ENCODE measurements at regions of chr9 and their contacts with region 1.

Region 1: GRCh38 chr9:13279284-13280141 is at the start of gene MPDZ:
- DNase-seq: peak; percentile 36 to 84 (median 62)
- H3K4me3 ChIP-seq: peak within 1 kb of the TSS; percentile 66 to 90 (median 81)
- H3K27ac ChIP-seq: peak within 1 kb of the TSS; percentile 93 to 100 (median 98)
- H3K27me3 ChIP-seq: no peaks in the 10 kb centered on the region
- CTCF ChIP-seq: peak in 10 of 56 donors; percentile 7 to 23 (median 14)
- total RNA-seq, gene MPDZ: 73.3 to 137 (median 97.1) TPM

Region 2: GRCh38 chr9:13033959-13034693 is 245.4 kb before region 1 on chr9:
- intact Hi-C with region 1: loop called in 1 of 2 experiments (anchors 5 kb)
- DNase-seq: peak; percentile 61 to 80 (median 68)
- H3K4me3 ChIP-seq: peak overlapping the region in 53 of 59 donors; percentile 5 to 54 (median 36)
- H3K27ac ChIP-seq: peak overlapping the region in 3 of 59 donors; percentile 7 to 36 (median 30)
- H3K27me3 ChIP-seq: no peaks in the 10 kb centered on the region
- CTCF ChIP-seq: peak; percentile 45 to 89 (median 79)

Region 3: DNA sequence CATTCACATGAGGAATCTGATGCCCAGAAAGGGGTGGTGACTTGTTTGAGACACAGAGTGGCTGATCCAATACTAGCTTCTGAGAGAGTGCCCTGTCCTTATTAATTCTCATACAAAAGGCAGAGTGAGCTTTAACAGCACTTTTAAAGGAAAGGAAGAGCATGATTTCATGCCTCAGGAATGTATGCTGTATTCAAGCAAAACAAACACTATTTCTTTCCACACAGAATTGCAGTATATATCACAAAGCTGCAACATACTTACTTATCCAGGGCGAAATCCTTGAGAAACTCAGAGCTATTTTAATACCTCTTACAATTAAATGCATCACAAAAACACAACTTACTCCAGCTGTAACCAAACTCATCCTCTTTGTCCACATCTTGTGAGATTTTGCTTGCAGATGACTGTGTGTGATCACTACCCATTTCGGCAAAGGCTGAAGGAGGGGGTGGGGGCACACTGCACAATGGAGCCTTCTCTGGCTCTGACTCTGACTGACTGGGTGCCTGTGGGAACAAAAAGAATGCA is 139.8 kb before region 1 on chr9:
- intact Hi-C with region 1: loop called (anchors 10 kb)
- DNase-seq: peak in 9 of 10 donors; percentile 38 to 73 (median 53)
- H3K4me3 ChIP-seq: peak overlapping the region in 36 of 59 donors; percentile 1 to 58 (median 30)
- H3K27ac ChIP-seq: peak overlapping the region in 55 of 59 donors; percentile 2 to 98 (median 68)
- H3K27me3 ChIP-seq: no peaks in the 10 kb centered on the region
- CTCF ChIP-seq: no peak

Region 4: GRCh38 chr9:13234932-13235331 is 44.6 kb before region 1 on chr9:
- intact Hi-C with region 1: no loop called
- DNase-seq: no peak
- H3K4me3 ChIP-seq: no peak overlapping the region
- H3K27ac ChIP-seq: no peak overlapping the region
- H3K27me3 ChIP-seq: no peaks in the 10 kb centered on the region
- CTCF ChIP-seq: no peak

Region 5: GRCh38 chr9:13330396-13331004 is 51.0 kb after region 1 on chr9:
- intact Hi-C with region 1: loop called in 1 of 2 experiments (anchors 10 kb)
- DNase-seq: peak in 1 of 10 donors; percentile 37
- H3K4me3 ChIP-seq: no peak overlapping the region
- H3K27ac ChIP-seq: peak overlapping the region in 1 of 59 donors; percentile 17
- H3K27me3 ChIP-seq: no peaks in the 10 kb centered on the region
- CTCF ChIP-seq: no peak

Region 6: DNA sequence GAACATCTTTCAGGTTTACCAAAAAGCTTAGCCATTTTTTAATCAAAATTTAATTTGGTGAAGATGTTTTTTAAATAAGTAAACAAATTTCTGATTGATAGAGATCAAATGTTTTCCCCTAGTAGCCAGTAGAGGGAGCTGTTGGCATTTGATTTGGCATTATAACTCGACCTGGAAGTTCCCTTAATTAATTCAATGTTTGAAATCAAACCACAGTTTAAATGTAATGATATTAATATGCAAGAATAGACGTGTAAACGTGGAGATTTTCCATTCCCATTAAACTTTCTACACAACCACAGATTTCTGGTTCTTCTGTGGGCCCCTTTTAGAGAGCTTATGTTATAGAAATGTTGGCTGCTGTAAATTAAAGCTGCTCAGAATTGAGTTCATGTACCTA is 148.1 kb after region 1 on chr9:
- intact Hi-C with region 1: no loop called
- DNase-seq: peak in 1 of 10 donors; percentile 30
- H3K4me3 ChIP-seq: peak overlapping the region in 1 of 59 donors; percentile 16
- H3K27ac ChIP-seq: peak overlapping the region in 19 of 59 donors; percentile 4 to 86 (median 46)
- H3K27me3 ChIP-seq: peaks cover 0 to 5% (median 0%) of the 10 kb centered on the region in 45 donors
- CTCF ChIP-seq: peak; percentile 76 to 92 (median 86)